Panc1 (cell line): ENCODE measurements at regions of chr2 and their contacts with region 1.

Region 1: GRCh38 chr2:42328148-42328833 is 32.7 kb downstream of the COX7A2L start:
- DNase-seq: no peak
- ATAC-seq: no peak
- H3K4me3 ChIP-seq: no peak overlapping the region
- H3K27ac ChIP-seq: no peak overlapping the region
- H3K4me1 ChIP-seq: peaks cover 8% of the 10 kb centered on the region
- H3K27me3 ChIP-seq: no peaks in the 10 kb centered on the region
- CTCF ChIP-seq: peak; percentile 46; the same call in 1 of the 2 replicates

Region 2: GRCh38 chr2:41869542-41870264 is 458.6 kb before region 1 on chr2:
- CTCF ChIA-PET with region 1: no interaction called
- POLR2A ChIA-PET with region 1: no interaction called
- in situ Hi-C with region 1: no loop called
- intact Hi-C with region 1: loop called (anchors 10 kb)
- DNase-seq: peak; percentile 35
- ATAC-seq: peak; percentile 94
- H3K4me3 ChIP-seq: no peak overlapping the region
- H3K27ac ChIP-seq: no peak overlapping the region
- H3K4me1 ChIP-seq: peaks cover 6% of the 10 kb centered on the region; the same call in 1 of the 2 replicates
- H3K27me3 ChIP-seq: no peaks in the 10 kb centered on the region
- CTCF ChIP-seq: peak; percentile 91

Region 3: DNA sequence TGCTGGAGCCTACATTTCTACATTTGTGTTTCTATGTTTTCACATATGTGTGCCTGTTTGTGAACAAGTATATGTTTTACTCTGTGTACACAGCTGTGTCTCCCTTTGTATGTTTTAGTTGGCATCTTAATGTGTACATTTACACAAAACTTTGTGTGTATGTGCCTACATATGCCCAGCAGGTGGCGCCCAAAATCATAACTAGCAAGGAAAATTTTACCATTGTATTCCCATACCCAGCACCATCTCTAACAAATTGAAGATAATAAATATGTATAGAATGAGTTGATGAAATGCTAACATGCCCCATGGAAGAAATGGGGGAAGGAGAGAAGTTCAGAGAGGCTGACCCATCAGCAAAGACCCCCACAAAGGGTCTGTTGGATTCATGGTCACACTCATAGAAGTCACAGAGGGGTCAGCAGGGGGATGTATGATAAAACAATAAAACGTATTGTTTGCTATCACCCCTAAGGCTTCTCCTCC is 232.3 kb before region 1 on chr2:
- CTCF ChIA-PET with region 1: interaction called, 4 read pairs
- POLR2A ChIA-PET with region 1: no interaction called
- in situ Hi-C with region 1: no loop called
- intact Hi-C with region 1: loop called (anchors 5 kb)
- DNase-seq: peak; percentile 41
- ATAC-seq: peak; percentile 75
- H3K4me3 ChIP-seq: no peak overlapping the region
- H3K27ac ChIP-seq: peak overlapping the region; percentile 75
- H3K4me1 ChIP-seq: peaks cover 41% of the 10 kb centered on the region
- H3K27me3 ChIP-seq: no peaks in the 10 kb centered on the region
- CTCF ChIP-seq: peak; percentile 79